Heart left ventricle (tissue), 16 donors: ENCODE measurements at regions of chr4 and their contacts with region 1.

Region 1: GRCh38 chr4:128600996-128601871 is 208.3 kb upstream of the JADE1 start:
- DNase-seq: peak in 4 of 5 donors; percentile 33 to 77 (median 46)
- ATAC-seq: peak; percentile 79 to 89 (median 84)
- H3K4me3 ChIP-seq: peak overlapping the region in 4 of 12 donors; percentile 6 to 26 (median 6)
- H3K27ac ChIP-seq: peak overlapping the region in 11 of 12 donors; percentile 37 to 81 (median 71)
- H3K4me1 ChIP-seq: peaks cover 0 to 35% (median 24%) of the 10 kb centered on the region in 12 donors
- H3K27me3 ChIP-seq: no peaks in the 10 kb centered on the region
- CTCF ChIP-seq: no peak
- POLR2A ChIP-seq: no peak

Region 2: GRCh38 chr4:128635141-128635954 is 34.1 kb after region 1 on chr4:
- intact Hi-C with region 1: loop called in 1 of 10 experiments (anchors 5 kb)
- DNase-seq: peak; percentile 86 to 95 (median 89)
- ATAC-seq: peak; percentile 70 to 91 (median 91)
- H3K4me3 ChIP-seq: peak overlapping the region in 7 of 12 donors; percentile 3 to 29 (median 20)
- H3K27ac ChIP-seq: peak overlapping the region; percentile 67 to 85 (median 80)
- H3K4me1 ChIP-seq: peaks cover 0 to 24% (median 11%) of the 10 kb centered on the region in 12 donors
- H3K27me3 ChIP-seq: no peaks in the 10 kb centered on the region
- CTCF ChIP-seq: no peak
- POLR2A ChIP-seq: no peak

Region 3: GRCh38 chr4:128663336-128663735 is 62.1 kb after region 1 on chr4:
- intact Hi-C with region 1: no loop called
- DNase-seq: no peak
- ATAC-seq: no peak
- H3K4me3 ChIP-seq: no peak overlapping the region
- H3K27ac ChIP-seq: no peak overlapping the region
- H3K4me1 ChIP-seq: peaks cover 0 to 29% (median 6%) of the 10 kb centered on the region in 12 donors
- H3K27me3 ChIP-seq: no peaks in the 10 kb centered on the region
- CTCF ChIP-seq: no peak
- POLR2A ChIP-seq: no peak